OCI-LY7 (cell line): ENCODE measurements at regions of chr1 and their contacts with region 1.

Region 1: GRCh38 chr1:235415008-235415904 is 48.0 kb downstream of the TBCE start:
- DNase-seq: peak; percentile 77
- H3K4me3 ChIP-seq: no peak overlapping the region
- H3K27ac ChIP-seq: no peak overlapping the region
- H3K4me1 ChIP-seq: no peaks in the 10 kb centered on the region
- CTCF ChIP-seq: peak; percentile 90

Region 2: GRCh38 chr1:234486498-234487448 is 928.5 kb before region 1 on chr1:
- CTCF ChIA-PET with region 1: no interaction called
- POLR2A ChIA-PET with region 1: no interaction called
- intact Hi-C with region 1: loop called (anchors 2 kb)
- DNase-seq: peak; percentile 77
- H3K4me3 ChIP-seq: peak overlapping the region; percentile 25
- H3K27ac ChIP-seq: no peak overlapping the region
- H3K4me1 ChIP-seq: peaks cover 42% of the 10 kb centered on the region
- CTCF ChIP-seq: peak; percentile 97

Region 3: DNA sequence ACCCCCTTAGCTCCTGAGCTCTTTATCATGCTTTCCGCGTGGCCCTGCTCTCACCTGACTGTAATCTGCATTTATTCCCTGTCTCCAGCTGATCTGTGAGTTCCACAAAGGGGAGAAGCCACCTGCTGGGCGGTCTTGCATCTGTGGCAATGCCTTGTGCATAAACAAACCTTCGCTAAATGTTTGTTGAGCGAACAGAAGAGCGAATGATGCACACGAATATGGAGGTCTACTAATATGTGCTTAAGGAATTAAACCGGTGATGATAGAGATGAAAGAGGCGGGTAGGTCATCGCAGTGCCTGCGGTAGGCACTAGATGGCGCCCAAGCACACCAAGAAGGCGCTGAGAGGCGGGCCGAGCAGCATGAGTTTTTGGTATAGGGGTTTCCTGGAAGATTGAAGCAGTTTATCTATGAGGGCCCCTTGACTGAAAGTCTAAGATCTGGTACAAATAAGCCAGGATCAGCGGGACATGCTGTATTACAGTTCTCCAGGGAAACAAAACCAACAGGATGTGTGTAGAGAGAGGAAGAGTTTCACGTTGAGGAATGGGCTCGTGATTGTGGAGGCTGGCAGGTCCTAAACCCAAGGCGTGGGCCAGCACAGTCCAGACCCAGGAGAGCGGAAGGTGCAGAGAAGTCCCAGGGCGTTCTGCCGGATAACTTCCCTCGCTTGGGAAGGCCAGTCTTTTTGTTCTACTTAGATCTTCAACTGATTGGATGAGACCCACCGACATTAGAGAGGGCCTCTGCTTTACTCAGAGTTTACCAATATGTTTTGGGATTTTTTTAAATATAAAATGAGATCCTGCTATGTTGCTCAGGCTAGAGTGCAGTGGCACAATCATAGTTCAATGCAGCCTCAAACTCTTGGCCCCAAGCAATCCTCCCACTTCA is 321.3 kb before region 1 on chr1:
- CTCF ChIA-PET with region 1: interaction called, 3 read pairs
- POLR2A ChIA-PET with region 1: no interaction called
- intact Hi-C with region 1: loop called (anchors 2 kb)
- DNase-seq: peak; percentile 82
- H3K4me3 ChIP-seq: no peak overlapping the region
- H3K27ac ChIP-seq: no peak overlapping the region
- H3K4me1 ChIP-seq: peaks cover 4% of the 10 kb centered on the region
- CTCF ChIP-seq: peak; percentile 100

Region 4: GRCh38 chr1:235105051-235106043 is 309.9 kb before region 1 on chr1:
- CTCF ChIA-PET with region 1: interaction called, 10 read pairs
- POLR2A ChIA-PET with region 1: no interaction called
- intact Hi-C with region 1: loop called (anchors 2 kb)
- DNase-seq: peak; percentile 13
- H3K4me3 ChIP-seq: peak overlapping the region; percentile 30
- H3K27ac ChIP-seq: peak overlapping the region; percentile 38
- H3K4me1 ChIP-seq: peaks cover 16% of the 10 kb centered on the region
- CTCF ChIP-seq: no peak

Region 5: GRCh38 chr1:235199441-235199840 is 215.8 kb before region 1 on chr1:
- CTCF ChIA-PET with region 1: no interaction called
- POLR2A ChIA-PET with region 1: no interaction called
- intact Hi-C with region 1: loop called (anchors 5 kb)
- DNase-seq: peak; percentile 46
- H3K4me3 ChIP-seq: no peak overlapping the region
- H3K27ac ChIP-seq: no peak overlapping the region
- H3K4me1 ChIP-seq: no peaks in the 10 kb centered on the region
- CTCF ChIP-seq: peak; percentile 81

Region 6: DNA sequence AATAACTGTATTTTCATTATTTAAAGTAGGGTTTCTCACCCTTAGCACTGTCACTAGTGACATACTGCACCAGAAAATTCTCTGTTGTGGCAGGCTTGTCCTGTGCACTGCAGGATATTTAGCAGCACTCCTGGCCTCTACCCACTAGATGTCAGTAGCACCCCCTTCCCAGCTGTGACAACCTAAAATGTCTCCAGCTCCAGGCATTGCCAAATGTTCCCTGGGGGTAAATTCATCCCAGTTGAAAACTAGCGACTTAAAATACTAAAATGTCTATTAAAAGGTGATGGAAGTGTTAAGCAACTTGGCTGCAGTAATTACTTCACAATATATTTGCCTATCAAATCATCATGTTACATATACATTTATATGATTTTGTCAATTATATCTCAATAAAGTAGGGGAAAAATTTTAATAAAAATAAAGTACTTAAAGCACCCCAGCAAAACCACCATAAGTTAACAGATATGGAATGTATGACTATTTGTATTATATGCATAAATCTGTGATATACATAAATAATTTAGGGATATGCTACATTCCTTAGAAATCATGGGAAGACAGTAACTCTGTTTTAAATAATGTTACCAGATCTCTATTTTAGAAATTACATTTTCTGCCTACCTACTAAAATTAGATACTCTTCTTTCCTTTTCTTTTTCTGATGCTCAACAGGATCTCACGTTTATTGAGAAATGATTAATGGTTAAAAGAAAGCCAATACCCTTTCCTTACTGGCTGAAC is 161.9 kb before region 1 on chr1:
- CTCF ChIA-PET with region 1: interaction called, 3 read pairs
- POLR2A ChIA-PET with region 1: interaction called, 3 read pairs
- intact Hi-C with region 1: loop called (anchors 1 kb)
- DNase-seq: peak; percentile 75
- H3K4me3 ChIP-seq: no peak overlapping the region
- H3K27ac ChIP-seq: no peak overlapping the region
- H3K4me1 ChIP-seq: no peaks in the 10 kb centered on the region
- CTCF ChIP-seq: peak; percentile 99

Region 7: DNA sequence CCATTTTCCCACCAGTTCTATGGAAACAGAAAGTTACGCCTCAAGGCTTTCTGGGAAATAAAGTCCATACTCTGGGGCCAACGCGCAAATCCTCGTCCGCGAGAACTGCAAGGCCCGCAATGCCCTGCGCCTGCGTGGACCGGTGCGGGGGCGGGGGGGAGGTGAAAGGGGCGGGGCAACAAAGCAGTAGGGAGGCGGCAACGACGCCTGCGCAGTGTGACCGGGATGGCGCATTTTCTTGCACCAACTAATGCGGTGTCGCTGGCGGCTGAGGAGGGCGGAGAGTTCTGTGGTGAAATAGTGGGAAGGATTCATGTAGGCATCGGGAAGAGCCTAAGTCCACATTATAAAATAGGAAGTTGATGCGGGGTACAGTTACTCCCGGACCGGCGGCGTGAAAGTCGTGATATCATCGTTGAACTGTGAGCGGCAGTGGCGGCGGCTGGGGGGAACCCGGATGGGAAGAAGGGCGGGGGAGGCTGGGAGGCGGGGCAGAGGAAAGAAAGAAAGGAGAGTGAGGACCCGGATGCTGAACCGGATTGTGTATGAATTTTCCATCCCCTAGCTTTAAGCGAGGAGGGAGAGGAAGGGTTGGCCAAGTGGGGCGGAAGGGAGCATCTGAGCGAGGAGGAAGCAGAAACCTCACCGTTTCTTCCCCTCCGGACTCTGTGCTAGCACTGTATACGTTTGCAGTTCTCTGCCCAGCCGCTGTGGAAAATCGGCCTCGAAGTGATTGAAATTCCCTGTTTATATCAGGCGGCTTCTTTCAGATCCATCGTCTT is 86.7 kb before region 1 on chr1 and contains the start of gene GGPS1:
- CTCF ChIA-PET with region 1: no interaction called
- POLR2A ChIA-PET with region 1: no interaction called
- intact Hi-C with region 1: loop called (anchors 2 kb)
- DNase-seq: peak; percentile 100
- H3K4me3 ChIP-seq: peak within 1 kb of the TSS; percentile 96
- H3K27ac ChIP-seq: peak within 1 kb of the TSS; percentile 91
- H3K4me1 ChIP-seq: peaks cover 44% of the 10 kb centered on the region
- CTCF ChIP-seq: no peak
- total RNA-seq, gene GGPS1: 8.0 and 21.9 TPM in 2 replicates